Testis (tissue), 5 donors: ENCODE measurements at regions of chr3 and their contacts with region 1.

Region 1: GRCh38 chr3:57755668-57756527 is at the start of gene SLMAP:
- DNase-seq: peak; percentile 99
- H3K4me3 ChIP-seq: peak within 1 kb of the TSS; percentile 86 to 94
- H3K27ac ChIP-seq: peak within 1 kb of the TSS; percentile 81 to 86
- H3K4me1 ChIP-seq: peaks cover 24% of the 10 kb centered on the region
- H3K27me3 ChIP-seq: no peaks in the 10 kb centered on the region
- CTCF ChIP-seq: peak in 2 of 3 experiments; percentile 16 to 33
- POLR2A ChIP-seq: no peak
- total RNA-seq, gene SLMAP: 120 to 126 TPM

Region 2: DNA sequence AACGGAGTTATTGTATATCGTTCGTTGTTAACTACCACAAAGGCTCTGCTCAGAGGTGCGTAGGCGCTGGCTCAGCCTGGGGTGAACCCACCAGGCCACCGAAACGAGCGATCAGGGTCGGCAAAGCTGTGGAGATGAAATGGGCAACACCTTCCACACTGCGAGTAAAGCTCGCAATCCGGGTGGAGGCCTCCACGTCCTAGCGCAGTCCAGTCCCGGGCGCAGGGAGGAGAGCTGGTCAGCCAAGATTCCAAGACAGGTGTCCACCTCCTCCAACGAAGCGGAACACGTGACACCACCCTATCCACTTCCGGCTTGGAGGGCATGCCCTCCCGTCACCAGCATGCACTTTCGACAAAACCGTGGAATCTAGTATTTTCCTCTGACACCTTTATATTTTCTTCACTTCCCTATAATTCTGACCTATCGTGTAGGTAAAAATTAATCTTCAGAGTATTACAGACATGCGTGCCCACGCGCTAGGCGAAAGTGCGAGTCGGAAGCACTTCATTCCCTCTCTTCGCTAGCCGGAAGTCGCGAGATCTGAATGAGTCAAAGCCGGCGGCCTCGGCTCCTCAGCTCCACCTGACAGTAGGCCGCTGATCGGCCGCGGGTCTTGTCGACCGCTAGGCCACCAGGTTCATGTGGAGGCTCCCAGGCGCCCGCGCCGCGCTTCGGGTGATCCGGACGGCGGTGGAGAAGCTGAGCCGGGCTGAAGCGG is 200.0 kb before region 1 on chr3 and contains the start of gene PDE12:
- intact Hi-C with region 1: loop called (anchors 10 kb)
- DNase-seq: peak; percentile 94
- H3K4me3 ChIP-seq: peak within 1 kb of the TSS; percentile 96 to 97
- H3K27ac ChIP-seq: peak within 1 kb of the TSS; percentile 85 to 92
- H3K4me1 ChIP-seq: peaks cover 22% of the 10 kb centered on the region
- H3K27me3 ChIP-seq: no peaks in the 10 kb centered on the region
- CTCF ChIP-seq: no peak
- POLR2A ChIP-seq: no peak
- total RNA-seq, gene PDE12: 20.5 to 26.0 TPM

Region 3: GRCh38 chr3:57597122-57597923 is 158.6 kb before region 1 on chr3 and contains the start of gene ARF4:
- intact Hi-C with region 1: loop called (anchors 5 kb)
- DNase-seq: peak; percentile 98
- H3K4me3 ChIP-seq: peak within 1 kb of the TSS; percentile 91 to 97
- H3K27ac ChIP-seq: peak within 1 kb of the TSS; percentile 92 to 98
- H3K4me1 ChIP-seq: peaks cover 45% of the 10 kb centered on the region
- H3K27me3 ChIP-seq: no peaks in the 10 kb centered on the region
- CTCF ChIP-seq: peak in 1 of 3 experiments; percentile 26
- POLR2A ChIP-seq: peak; percentile 93
- total RNA-seq, gene ARF4: 169 to 205 TPM

Region 4: GRCh38 chr3:57692259-57693147 is 63.4 kb before region 1 on chr3 and contains the start of gene DENND6A:
- intact Hi-C with region 1: loop called (anchors 10 kb)
- DNase-seq: peak; percentile 95
- H3K4me3 ChIP-seq: peak within 1 kb of the TSS; percentile 89 to 91
- H3K27ac ChIP-seq: peak within 1 kb of the TSS; percentile 95 to 98
- H3K4me1 ChIP-seq: peaks cover 11% of the 10 kb centered on the region
- H3K27me3 ChIP-seq: no peaks in the 10 kb centered on the region
- CTCF ChIP-seq: no peak
- POLR2A ChIP-seq: peak; percentile 70
- total RNA-seq, gene DENND6A: 18.7 to 20.6 TPM

Region 5: DNA sequence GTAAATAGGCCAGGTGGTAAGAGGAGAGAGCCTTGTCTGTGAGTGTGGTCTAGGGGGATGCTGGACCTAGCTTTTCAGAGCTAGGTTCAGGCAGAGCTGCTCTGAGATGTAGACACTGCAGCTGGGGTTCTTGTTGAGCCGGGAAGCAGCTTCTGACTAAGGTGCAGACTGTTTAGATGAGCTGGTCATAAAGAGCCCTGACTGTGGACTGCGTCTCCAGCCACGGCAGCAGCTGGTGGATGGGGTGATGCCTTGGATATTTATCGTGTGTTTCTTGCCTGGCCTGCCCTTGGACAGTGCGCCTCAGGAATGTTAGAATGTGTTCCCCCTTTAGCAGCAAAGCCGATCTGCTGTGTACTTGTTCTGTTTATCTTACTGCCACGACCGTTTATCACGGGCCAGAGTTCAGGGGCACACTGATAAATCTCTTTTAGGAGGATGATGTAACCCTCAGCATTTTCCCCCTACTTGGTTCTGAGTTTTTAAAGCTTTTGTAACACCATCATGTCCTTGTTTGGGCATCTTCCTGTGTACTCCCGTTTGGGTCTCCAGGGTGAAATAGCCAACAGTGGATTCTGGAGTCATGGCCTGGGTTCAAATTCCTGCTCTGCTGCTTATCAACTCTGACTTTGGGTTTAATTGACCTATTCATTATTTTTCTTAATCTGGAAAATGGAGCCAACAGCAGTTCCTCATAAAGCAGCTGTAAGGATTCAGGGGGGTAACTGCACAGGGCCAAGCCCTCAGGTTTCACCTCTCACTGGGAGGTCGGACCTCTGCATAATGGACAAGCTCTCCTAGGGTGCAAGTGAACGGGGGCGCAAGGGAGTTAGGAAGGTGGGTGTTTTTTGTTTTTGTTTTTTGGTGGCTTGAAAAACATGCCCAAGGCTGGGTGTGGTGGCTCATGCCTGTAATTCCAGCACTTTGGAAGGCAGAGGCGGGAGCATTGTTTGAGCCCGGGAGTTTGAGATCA is 303.7 kb after region 1 on chr3:
- intact Hi-C with region 1: no loop called
- DNase-seq: peak; percentile 81
- H3K4me3 ChIP-seq: no peak overlapping the region
- H3K27ac ChIP-seq: peak overlapping the region; percentile 45 to 65
- H3K4me1 ChIP-seq: peaks cover 41% of the 10 kb centered on the region
- H3K27me3 ChIP-seq: no peaks in the 10 kb centered on the region
- CTCF ChIP-seq: no peak
- POLR2A ChIP-seq: no peak